ENCODE measurements at regions of chr11 and their contacts with region 1.

Region 1: GRCh38 chr11:95705485-95706124 is 84.0 kb downstream of the FAM76B start:
- DNase-seq: peak; percentile 92
- ATAC-seq: peak; percentile 83
- H3K4me3 Mint-ChIP-seq: no peak overlapping the region
- H3K27ac Mint-ChIP-seq: no peak overlapping the region
- H3K4me1 Mint-ChIP-seq: peaks cover 12% of the 10 kb centered on the region
- H3K27me3 Mint-ChIP-seq: no peaks in the 10 kb centered on the region

Region 2: DNA sequence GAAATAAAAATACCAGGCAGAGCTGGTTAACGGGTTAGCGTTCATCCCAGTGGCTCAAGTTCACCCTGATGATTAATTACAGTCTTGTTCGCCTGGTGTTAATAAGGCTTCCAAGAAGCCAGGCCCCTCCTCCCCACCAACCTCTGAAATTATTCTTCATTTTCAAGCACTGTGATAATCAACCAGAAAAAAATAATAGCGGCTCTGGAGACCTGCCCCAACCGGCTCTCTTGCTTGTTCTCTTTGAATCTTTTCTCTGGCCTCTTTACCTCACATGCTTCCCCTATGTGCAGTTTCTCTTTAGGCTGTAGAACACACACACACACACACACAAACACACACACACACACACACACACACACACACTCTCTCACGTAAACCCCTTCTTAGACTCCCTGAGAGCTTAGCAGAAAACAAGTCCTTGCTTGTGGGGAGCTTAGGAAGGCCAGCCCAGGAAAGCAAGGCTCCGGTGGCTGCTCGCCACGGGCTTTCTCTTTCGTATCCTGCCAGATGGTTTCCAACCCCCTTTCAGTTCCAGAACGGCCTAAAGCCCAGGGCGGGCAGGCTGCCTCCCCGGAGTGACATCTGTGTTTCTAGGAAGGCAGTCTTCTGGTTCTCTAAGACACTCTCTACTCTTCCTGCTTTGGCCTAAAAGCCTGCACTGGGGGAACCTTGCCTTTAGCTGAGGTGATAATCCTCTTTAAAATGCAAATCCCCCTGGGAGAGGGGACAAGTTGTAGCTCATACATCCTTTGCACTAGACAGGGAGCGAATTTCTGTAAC is 368.2 kb before region 1 on chr11:
- CTCF ChIA-PET with region 1: interaction called, 4 read pairs
- POLR2A ChIA-PET with region 1: no interaction called
- intact Hi-C with region 1: loop called (anchors 5 to 10 kb)
- DNase-seq: peak; percentile 63
- ATAC-seq: peak; percentile 74
- H3K4me3 Mint-ChIP-seq: no peak overlapping the region
- H3K27ac Mint-ChIP-seq: no peak overlapping the region
- H3K4me1 Mint-ChIP-seq: peaks cover 1% of the 10 kb centered on the region
- H3K27me3 Mint-ChIP-seq: no peaks in the 10 kb centered on the region

Region 3: DNA sequence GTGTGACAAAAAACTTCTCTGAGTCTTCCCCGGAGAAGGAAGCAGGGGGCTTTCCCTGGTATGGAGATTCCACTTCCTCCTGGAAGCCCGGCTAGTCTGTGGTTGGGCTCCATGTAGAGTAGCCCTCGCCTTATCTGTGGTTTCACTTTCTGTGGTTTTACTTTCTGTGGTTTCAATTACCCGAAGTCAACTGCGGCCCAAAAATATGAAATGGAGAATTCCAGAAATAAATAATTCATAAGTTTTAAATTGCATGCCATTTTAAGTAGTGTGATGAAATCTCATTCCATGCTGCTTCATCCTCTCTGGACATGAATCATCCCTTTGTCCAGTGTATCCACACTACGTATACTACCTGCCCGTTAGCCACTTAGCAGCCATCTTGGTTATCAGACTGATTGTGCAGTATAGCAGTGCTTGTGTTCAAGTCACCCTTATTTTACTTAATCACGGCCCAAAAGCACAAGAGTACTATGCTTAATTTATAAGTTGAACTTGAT is 199.6 kb before region 1 on chr11:
- CTCF ChIA-PET with region 1: interaction called, 13 read pairs
- POLR2A ChIA-PET with region 1: no interaction called
- intact Hi-C with region 1: loop called in 1 of 2 experiments (anchors 5 kb)
- DNase-seq: no peak
- ATAC-seq: no peak
- H3K4me3 Mint-ChIP-seq: no peak overlapping the region
- H3K27ac Mint-ChIP-seq: no peak overlapping the region
- H3K4me1 Mint-ChIP-seq: peaks cover 9% of the 10 kb centered on the region
- H3K27me3 Mint-ChIP-seq: peaks cover 2% of the 10 kb centered on the region

Region 4: DNA sequence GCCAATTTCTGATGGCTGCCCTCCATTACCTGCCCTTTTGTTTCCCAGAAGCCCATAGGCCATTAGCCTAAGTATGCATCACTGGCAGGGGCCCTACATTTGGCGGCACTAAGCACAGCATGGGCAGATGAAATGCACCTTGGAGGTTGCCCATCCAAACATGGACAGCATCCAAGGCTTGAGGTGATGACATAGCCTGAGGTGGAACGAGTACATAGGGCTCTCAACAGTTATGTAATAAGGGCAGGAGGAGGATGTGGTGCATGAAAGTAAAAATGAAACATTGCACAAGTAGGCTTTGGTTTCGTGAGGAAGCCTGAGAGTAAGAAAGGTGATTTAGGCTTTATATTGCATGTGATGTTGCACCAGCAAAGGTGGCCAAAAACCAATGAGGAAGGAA is 64.1 kb before region 1 on chr11:
- CTCF ChIA-PET with region 1: interaction called, 5 read pairs
- POLR2A ChIA-PET with region 1: no interaction called
- intact Hi-C with region 1: loop called (anchors 2 kb)
- DNase-seq: peak; percentile 36
- ATAC-seq: peak; percentile 98
- H3K4me3 Mint-ChIP-seq: no peak overlapping the region
- H3K27ac Mint-ChIP-seq: peak overlapping the region; percentile 49
- H3K4me1 Mint-ChIP-seq: peaks cover 15% of the 10 kb centered on the region
- H3K27me3 Mint-ChIP-seq: no peaks in the 10 kb centered on the region

Region 5: GRCh38 chr11:95764267-95764898 is 58.8 kb after region 1 on chr11:
- CTCF ChIA-PET with region 1: interaction called, 9 read pairs
- POLR2A ChIA-PET with region 1: no interaction called
- intact Hi-C with region 1: loop called (anchors 1 kb)
- DNase-seq: no peak
- ATAC-seq: peak; percentile 65
- H3K4me3 Mint-ChIP-seq: no peak overlapping the region
- H3K27ac Mint-ChIP-seq: no peak overlapping the region
- H3K4me1 Mint-ChIP-seq: no peaks in the 10 kb centered on the region
- H3K27me3 Mint-ChIP-seq: no peaks in the 10 kb centered on the region

Region 6: GRCh38 chr11:95821640-95822039 is 116.0 kb after region 1 on chr11:
- CTCF ChIA-PET with region 1: no interaction called
- POLR2A ChIA-PET with region 1: no interaction called
- intact Hi-C with region 1: no loop called
- DNase-seq: no peak
- ATAC-seq: peak; percentile 39
- H3K4me3 Mint-ChIP-seq: no peak overlapping the region
- H3K27ac Mint-ChIP-seq: no peak overlapping the region
- H3K4me1 Mint-ChIP-seq: no peaks in the 10 kb centered on the region
- H3K27me3 Mint-ChIP-seq: no peaks in the 10 kb centered on the region

Measured in activated CD4-positive, alpha-beta T cell treated with anti-CD3 and anti-CD28 coated beads for 36 hours (primary cell).